ENCODE measurements at regions of chr16 and their contacts with region 1.

Region 1: DNA sequence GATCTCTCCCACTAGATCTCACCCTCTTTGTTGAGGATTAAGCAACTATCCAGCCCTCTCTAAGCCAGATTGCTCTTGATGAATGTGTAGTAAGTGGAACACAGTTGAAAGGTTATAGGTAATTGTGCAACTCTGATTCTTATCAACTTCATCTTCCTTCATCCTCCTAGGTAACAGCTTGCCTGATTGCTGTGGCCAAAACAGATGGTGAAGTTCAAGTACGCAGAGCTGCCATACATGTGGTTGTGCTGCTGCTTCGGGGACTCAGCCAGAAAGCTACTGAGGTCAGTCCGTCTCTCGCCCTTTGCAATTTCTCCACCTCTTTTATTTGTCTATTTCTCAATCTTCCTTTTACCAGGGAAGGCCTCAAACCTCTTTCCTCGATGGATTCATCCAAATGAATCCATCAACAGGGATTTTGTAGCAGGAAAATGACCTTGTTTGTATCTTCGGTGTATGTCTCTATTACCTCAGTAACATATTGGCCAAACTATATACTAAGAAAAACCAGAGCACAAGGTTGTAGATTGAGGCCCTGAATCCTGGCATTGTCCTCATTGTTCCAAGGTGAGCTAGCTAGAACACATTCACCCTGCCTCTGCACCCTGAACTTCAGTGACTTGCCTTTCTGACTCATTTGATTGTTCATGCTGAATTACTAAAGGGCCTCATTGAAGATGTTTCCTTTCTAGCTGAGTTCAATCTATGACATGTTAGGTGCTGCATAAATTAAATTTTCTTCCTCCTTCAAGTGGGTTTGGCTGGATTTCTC is 65.1 kb upstream of the HAS3 start:
- DNase-seq: no peak
- ATAC-seq: no peak
- H3K4me3 Mint-ChIP-seq: no peak overlapping the region
- H3K27ac Mint-ChIP-seq: no peak overlapping the region
- H3K4me1 Mint-ChIP-seq: peaks cover 0 to 2% (median 0%) of the 10 kb centered on the region in 4 donors
- H3K27me3 Mint-ChIP-seq: no peaks in the 10 kb centered on the region

Region 2: GRCh38 chr16:69029121-69029520 is 11.2 kb before region 1 on chr16:
- POLR2A ChIA-PET with region 1: no interaction called
- DNase-seq: no peak
- ATAC-seq: no peak
- H3K4me3 Mint-ChIP-seq: no peak overlapping the region
- H3K27ac Mint-ChIP-seq: no peak overlapping the region
- H3K4me1 Mint-ChIP-seq: peaks cover 0 to 5% (median 0%) of the 10 kb centered on the region in 4 donors
- H3K27me3 Mint-ChIP-seq: no peaks in the 10 kb centered on the region

Region 3: DNA sequence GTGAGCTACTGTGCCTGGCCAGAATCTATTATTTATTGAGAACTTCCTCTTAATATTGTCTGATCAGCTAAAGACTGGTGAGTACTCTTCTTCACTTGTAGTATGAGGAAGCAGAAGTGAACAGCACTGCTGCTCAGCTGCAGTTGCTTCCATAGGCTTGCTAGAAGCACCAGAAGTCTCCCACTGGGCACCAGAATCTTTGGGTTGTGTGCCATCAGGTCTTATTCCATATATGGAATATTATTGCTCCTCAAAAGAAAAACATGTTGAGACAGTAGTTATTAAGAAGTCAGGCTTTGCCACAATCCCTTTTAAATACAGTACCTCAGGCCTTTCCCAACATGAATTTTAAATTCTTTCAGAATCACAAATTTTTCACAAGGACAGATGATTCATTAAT is 163.8 kb after region 1 on chr16:
- POLR2A ChIA-PET with region 1: interaction called, 10 read pairs
- DNase-seq: no peak
- ATAC-seq: no peak
- H3K4me3 Mint-ChIP-seq: no peak overlapping the region
- H3K27ac Mint-ChIP-seq: peak overlapping the region in 1 of 10 donors; percentile 68
- H3K4me1 Mint-ChIP-seq: peaks cover 0 to 10% (median 5%) of the 10 kb centered on the region in 4 donors
- H3K27me3 Mint-ChIP-seq: no peaks in the 10 kb centered on the region